ENCODE measurements at regions of chr6 and their contacts with region 1.

Region 1: GRCh38 chr6:108782179-108783041 is 65.8 kb upstream of the ARMC2 start:
- DNase-seq: peak; percentile 81 to 88 (median 83)
- ATAC-seq: peak; percentile 85 to 96 (median 94)
- H3K4me3 ChIP-seq: peak overlapping the region in 11 of 12 donors; percentile 4 to 66 (median 54)
- H3K27ac ChIP-seq: peak overlapping the region in 4 of 12 donors; percentile 25 to 68 (median 55)
- H3K4me1 ChIP-seq: peaks cover 0 to 15% (median 6%) of the 10 kb centered on the region in 12 donors
- H3K27me3 ChIP-seq: no peaks in the 10 kb centered on the region
- CTCF ChIP-seq: peak; percentile 65 to 88 (median 78)
- POLR2A ChIP-seq: no peak

Region 2: GRCh38 chr6:108432792-108433191 is 349.6 kb before region 1 on chr6:
- intact Hi-C with region 1: no loop called
- DNase-seq: no peak
- ATAC-seq: peak in 1 of 4 donors; percentile 24
- H3K4me3 ChIP-seq: no peak overlapping the region
- H3K27ac ChIP-seq: peak overlapping the region in 2 of 12 donors; percentile 27 to 36
- H3K4me1 ChIP-seq: peaks cover 0 to 5% (median 0%) of the 10 kb centered on the region in 12 donors
- H3K27me3 ChIP-seq: no peaks in the 10 kb centered on the region
- CTCF ChIP-seq: no peak
- POLR2A ChIP-seq: no peak

Region 3: GRCh38 chr6:108541838-108542759 is 240.3 kb before region 1 on chr6:
- intact Hi-C with region 1: loop called in 9 of 10 experiments (anchors 1 to 5 kb)
- DNase-seq: peak; percentile 61 to 76 (median 70)
- ATAC-seq: peak; percentile 54 to 86 (median 80)
- H3K4me3 ChIP-seq: no peak overlapping the region
- H3K27ac ChIP-seq: no peak overlapping the region
- H3K4me1 ChIP-seq: peaks cover 0 to 14% (median 0%) of the 10 kb centered on the region in 12 donors
- H3K27me3 ChIP-seq: no peaks in the 10 kb centered on the region
- CTCF ChIP-seq: peak; percentile 68 to 92 (median 89)
- POLR2A ChIP-seq: no peak

Region 4: DNA sequence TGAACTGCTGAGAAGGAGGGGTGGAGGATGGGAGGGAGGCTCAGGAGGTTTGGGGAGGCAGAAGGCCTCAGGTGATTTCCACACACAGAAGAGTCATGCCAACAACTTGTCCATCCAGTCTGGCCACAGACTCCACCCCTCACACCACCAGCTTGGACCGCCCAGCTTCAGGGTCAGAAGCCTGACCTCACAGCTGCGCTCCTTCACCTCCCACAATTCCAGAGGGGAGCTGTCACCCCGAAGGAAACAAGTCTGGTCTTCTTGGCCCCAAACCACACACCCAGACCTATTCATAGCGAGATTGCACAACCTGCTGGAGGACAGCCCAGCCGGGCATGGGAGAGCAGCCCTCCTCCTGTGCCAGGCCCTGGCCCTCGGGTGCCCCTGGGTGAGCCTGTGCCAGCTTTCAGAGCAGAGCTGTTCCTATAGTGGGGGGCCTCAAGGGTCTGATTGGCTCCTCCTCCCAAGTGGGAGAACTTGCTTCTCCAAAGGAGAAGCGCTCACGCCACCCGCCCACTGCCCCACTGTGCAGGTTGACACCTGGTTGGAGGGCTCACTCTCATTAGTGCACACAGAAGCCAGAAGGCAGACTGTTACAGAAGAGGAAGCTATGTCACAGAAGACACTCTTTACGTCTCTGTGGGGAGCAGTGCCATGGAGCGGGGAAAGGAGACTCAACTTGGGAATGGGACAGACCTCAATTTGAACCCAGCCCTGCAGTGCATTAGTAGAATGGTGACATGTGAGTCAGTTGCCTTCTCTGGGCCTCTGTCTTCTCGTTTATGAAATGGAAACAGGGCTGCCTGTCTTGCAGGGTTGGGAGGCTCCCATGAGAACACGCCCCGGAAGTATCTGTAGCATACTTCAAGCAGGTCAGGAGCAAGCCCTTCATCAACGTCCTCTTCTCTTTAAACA is 92.9 kb before region 1 on chr6:
- intact Hi-C with region 1: loop called in 1 of 10 experiments (anchors 10 kb)
- DNase-seq: peak; percentile 85 to 94 (median 90)
- ATAC-seq: peak; percentile 91 to 97 (median 96)
- H3K4me3 ChIP-seq: no peak overlapping the region
- H3K27ac ChIP-seq: peak overlapping the region in 11 of 12 donors; percentile 22 to 78 (median 65)
- H3K4me1 ChIP-seq: peaks cover 0 to 53% (median 29%) of the 10 kb centered on the region in 12 donors
- H3K27me3 ChIP-seq: no peaks in the 10 kb centered on the region
- CTCF ChIP-seq: no peak
- POLR2A ChIP-seq: no peak

Region 5: DNA sequence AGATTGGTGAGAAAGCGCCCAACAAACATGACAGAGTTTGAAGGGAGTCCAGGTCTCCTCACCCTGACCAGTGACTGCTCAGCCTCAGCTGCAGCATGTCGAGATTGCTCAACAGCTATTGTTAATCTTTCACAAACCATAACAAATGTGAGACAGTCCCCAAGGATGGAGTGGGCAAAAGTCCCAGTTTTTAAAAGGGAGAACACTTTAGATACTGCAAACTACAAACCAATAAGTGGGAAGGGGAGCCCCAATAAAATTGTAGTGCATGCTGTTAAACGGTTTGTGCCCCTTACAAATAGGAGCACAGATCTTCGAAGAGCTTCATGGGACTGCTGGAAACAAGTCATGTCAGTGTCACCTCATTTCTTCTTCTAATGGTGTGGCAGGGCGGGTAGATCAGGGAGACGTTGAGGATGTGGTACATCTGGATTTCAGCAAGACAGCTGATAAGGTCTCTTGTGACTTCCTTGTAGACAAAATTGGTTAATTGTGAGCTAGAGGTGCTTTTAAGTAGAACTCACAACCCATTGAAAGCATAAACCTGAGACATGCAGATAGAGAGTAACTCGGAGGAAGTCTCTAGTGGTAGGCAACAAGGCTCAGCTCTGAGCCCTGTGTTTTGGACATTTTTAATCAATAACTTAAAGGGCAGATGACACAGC is 68.2 kb before region 1 on chr6:
- intact Hi-C with region 1: no loop called
- DNase-seq: peak in 2 of 5 donors; percentile 39 to 55
- ATAC-seq: peak; percentile 48 to 78 (median 58)
- H3K4me3 ChIP-seq: peak overlapping the region in 1 of 12 donors; percentile 15
- H3K27ac ChIP-seq: peak overlapping the region in 3 of 12 donors; percentile 4 to 14 (median 11)
- H3K4me1 ChIP-seq: peaks cover 0 to 40% (median 16%) of the 10 kb centered on the region in 12 donors
- H3K27me3 ChIP-seq: no peaks in the 10 kb centered on the region
- CTCF ChIP-seq: no peak
- POLR2A ChIP-seq: no peak

Measured in heart left ventricle (tissue), 16 donors.